ENCODE measurements at regions of chr20 and their contacts with region 1.

Region 1: GRCh38 chr20:38547288-38548085 is 33.5 kb upstream of the ADIG start:
- DNase-seq: no peak
- ATAC-seq: no peak
- H3K4me3 ChIP-seq: no peak overlapping the region
- H3K4me3 Mint-ChIP-seq: no peak overlapping the region
- H3K27ac ChIP-seq: no peak overlapping the region
- H3K27ac Mint-ChIP-seq: peak overlapping the region; percentile 17
- H3K4me1 ChIP-seq: no peaks in the 10 kb centered on the region
- H3K4me1 Mint-ChIP-seq: peaks cover 20% of the 10 kb centered on the region
- H3K27me3 ChIP-seq: no peaks in the 10 kb centered on the region
- H3K27me3 Mint-ChIP-seq: no peaks in the 10 kb centered on the region
- CTCF ChIP-seq: no peak

Region 2: GRCh38 chr20:38498909-38499308 is 48.6 kb before region 1 on chr20:
- CTCF ChIA-PET with region 1: no interaction called
- POLR2A ChIA-PET with region 1: no interaction called
- intact Hi-C with region 1: loop called in 1 of 2 experiments (anchors 5 kb)
- DNase-seq: no peak
- ATAC-seq: no peak
- H3K4me3 ChIP-seq: no peak overlapping the region
- H3K4me3 Mint-ChIP-seq: no peak overlapping the region
- H3K27ac ChIP-seq: no peak overlapping the region
- H3K27ac Mint-ChIP-seq: no peak overlapping the region
- H3K4me1 ChIP-seq: no peaks in the 10 kb centered on the region
- H3K4me1 Mint-ChIP-seq: no peaks in the 10 kb centered on the region
- H3K27me3 ChIP-seq: no peaks in the 10 kb centered on the region
- H3K27me3 Mint-ChIP-seq: no peaks in the 10 kb centered on the region
- CTCF ChIP-seq: no peak

Region 3: DNA sequence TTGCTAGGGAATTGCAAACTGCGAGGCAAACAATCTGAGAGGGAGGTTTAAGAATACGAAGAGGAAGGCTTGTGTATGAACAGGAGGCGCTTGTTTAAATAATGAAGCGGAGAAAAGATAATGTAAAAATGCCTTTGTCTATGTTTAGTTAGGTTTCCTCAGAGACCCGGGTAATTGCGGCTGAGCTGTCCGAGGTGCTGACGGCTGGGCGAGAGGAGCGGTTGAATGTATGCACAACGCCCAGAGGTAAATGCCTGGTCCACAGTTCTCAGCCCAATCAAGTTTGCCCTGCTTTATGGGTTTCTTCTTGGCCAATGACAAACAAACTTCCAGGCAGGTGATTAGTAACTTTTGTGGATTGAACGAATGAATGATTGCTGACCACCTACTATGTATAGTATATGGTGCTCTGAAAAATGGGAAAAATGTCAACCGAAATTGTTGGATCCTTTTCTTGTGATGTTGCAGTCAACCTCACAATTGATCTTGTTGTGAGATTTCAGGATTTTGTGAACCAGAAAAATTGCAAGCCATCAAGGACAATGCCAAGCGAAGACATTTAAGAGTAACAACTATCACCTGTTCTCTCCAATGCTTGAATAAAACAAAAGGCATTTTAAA is 138.5 kb after region 1 on chr20:
- CTCF ChIA-PET with region 1: no interaction called
- POLR2A ChIA-PET with region 1: no interaction called
- intact Hi-C with region 1: no loop called
- DNase-seq: peak; percentile 11 to 63 (median 27)
- ATAC-seq: peak; percentile 55
- H3K4me3 ChIP-seq: no peak overlapping the region
- H3K4me3 Mint-ChIP-seq: no peak overlapping the region
- H3K27ac ChIP-seq: no peak overlapping the region
- H3K27ac Mint-ChIP-seq: no peak overlapping the region
- H3K4me1 ChIP-seq: no peaks in the 10 kb centered on the region
- H3K4me1 Mint-ChIP-seq: no peaks in the 10 kb centered on the region
- H3K27me3 ChIP-seq: peaks cover 29 to 37% of the 10 kb centered on the region in 2 experiments
- H3K27me3 Mint-ChIP-seq: peaks cover 89% of the 10 kb centered on the region
- CTCF ChIP-seq: no peak